ENCODE measurements at regions of chr6 and their contacts with region 1.

Region 1: GRCh38 chr6:140441256-140441655 is 1066.8 kb upstream of the CITED2 start:
- DNase-seq: no peak
- H3K4me3 ChIP-seq: no peak overlapping the region
- H3K27ac ChIP-seq: peak overlapping the region in 3 of 4 donors; percentile 12 to 43 (median 15)
- H3K4me1 ChIP-seq: peaks cover 18 to 51% (median 35%) of the 10 kb centered on the region in 4 donors
- H3K27me3 ChIP-seq: no peaks in the 10 kb centered on the region
- CTCF ChIP-seq: peak; percentile 42 to 55 (median 49)
- EP300 ChIP-seq: no peak
- POLR2A ChIP-seq: no peak

Region 2: DNA sequence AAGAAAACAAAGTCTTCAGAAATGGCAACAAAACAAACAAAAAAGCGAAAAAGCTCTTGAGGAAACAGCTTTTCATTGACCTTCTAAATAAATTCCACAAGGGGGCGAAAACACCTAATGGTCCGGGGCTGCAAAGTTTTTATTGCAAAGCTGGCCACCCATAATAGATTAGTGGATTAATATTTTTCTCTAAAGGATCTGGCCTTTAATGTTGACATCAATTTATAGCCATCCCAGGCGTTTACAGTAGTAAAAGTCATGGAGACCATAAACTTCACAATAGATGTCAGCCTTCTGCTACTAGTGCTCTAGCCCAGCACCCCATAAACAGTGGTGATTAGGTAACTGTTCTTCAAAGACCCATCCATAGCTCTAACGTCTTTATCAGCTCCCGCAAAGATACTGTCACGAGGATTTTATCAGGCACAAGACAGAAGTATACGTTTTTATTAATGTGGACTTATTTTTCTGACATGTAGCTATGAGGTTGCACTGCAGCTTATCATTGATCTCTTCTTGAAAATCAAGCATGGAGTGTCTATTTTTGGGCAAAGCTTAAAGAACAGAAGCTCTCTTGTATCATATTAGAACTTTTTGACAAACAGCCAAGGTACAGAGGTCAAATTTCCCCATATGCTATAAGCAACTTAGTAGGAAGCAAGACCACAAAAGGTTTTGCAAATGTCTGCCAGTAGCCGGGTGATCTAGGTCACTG is 1071.5 kb before region 1 on chr6:
- intact Hi-C with region 1: loop called (anchors 5 kb)
- DNase-seq: no peak
- H3K4me3 ChIP-seq: peak overlapping the region; percentile 80 to 91 (median 85)
- H3K27ac ChIP-seq: peak overlapping the region; percentile 90 to 96 (median 95)
- H3K4me1 ChIP-seq: peaks cover 11 to 41% (median 21%) of the 10 kb centered on the region in 4 donors
- H3K27me3 ChIP-seq: no peaks in the 10 kb centered on the region
- CTCF ChIP-seq: peak; percentile 71 to 76 (median 73)
- EP300 ChIP-seq: no peak
- POLR2A ChIP-seq: no peak

Region 3: DNA sequence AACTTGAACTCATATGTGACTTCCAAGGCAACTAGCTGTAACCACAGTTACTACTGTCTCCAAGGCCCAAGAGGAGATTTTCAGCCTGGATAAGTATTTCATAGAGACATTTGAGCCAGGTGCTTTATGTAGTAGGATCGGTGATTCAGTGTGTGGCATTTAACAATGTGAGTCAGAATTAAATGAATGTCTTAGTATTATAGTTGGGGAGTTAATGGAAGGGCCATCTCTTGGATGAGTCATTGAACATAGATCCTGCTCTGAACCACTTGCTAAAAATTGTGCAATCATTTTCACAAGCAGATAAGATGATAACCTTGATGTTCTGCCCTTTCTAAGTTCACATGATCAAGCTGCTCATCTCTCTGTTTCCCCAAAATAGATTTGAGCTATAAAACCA is 397.9 kb before region 1 on chr6:
- intact Hi-C with region 1: no loop called
- DNase-seq: no peak
- H3K4me3 ChIP-seq: no peak overlapping the region
- H3K27ac ChIP-seq: no peak overlapping the region
- H3K4me1 ChIP-seq: peaks cover 0 to 9% (median 4%) of the 10 kb centered on the region in 4 donors
- H3K27me3 ChIP-seq: no peaks in the 10 kb centered on the region
- CTCF ChIP-seq: no peak
- EP300 ChIP-seq: no peak
- POLR2A ChIP-seq: no peak